ENCODE measurements at regions of chr19 and their contacts with region 1.

Region 1: GRCh38 chr19:42440357-42441048 is 2.2 kb downstream of the CXCL17 start:
- DNase-seq: peak; percentile 69 to 88 (median 80)
- ATAC-seq: peak; percentile 43
- H3K4me3 ChIP-seq: no peak overlapping the region
- H3K4me3 Mint-ChIP-seq: no peak overlapping the region
- H3K27ac ChIP-seq: no peak overlapping the region
- H3K27ac Mint-ChIP-seq: peak overlapping the region; percentile 4
- H3K4me1 ChIP-seq: peaks cover 15% of the 10 kb centered on the region
- H3K4me1 Mint-ChIP-seq: peaks cover 20% of the 10 kb centered on the region
- H3K27me3 ChIP-seq: no peaks in the 10 kb centered on the region
- H3K27me3 Mint-ChIP-seq: no peaks in the 10 kb centered on the region
- CTCF ChIP-seq: peak; percentile 96

Region 2: GRCh38 chr19:42401365-42402303 is 38.9 kb before region 1 on chr19:
- CTCF ChIA-PET with region 1: interaction called, 11 read pairs
- POLR2A ChIA-PET with region 1: no interaction called
- intact Hi-C with region 1: no loop called
- DNase-seq: peak; percentile 56 to 86 (median 77)
- ATAC-seq: peak; percentile 71
- H3K4me3 ChIP-seq: peak overlapping the region; percentile 47 to 61
- H3K4me3 Mint-ChIP-seq: peak overlapping the region; percentile 85
- H3K27ac ChIP-seq: peak overlapping the region; percentile 25 to 46
- H3K27ac Mint-ChIP-seq: peak overlapping the region; percentile 88
- H3K4me1 ChIP-seq: peaks cover 18% of the 10 kb centered on the region
- H3K4me1 Mint-ChIP-seq: peaks cover 41% of the 10 kb centered on the region
- H3K27me3 ChIP-seq: no peaks in the 10 kb centered on the region
- H3K27me3 Mint-ChIP-seq: no peaks in the 10 kb centered on the region
- CTCF ChIP-seq: peak; percentile 79

Region 3: GRCh38 chr19:43416951-43417623 is 976.6 kb after region 1 on chr19:
- CTCF ChIA-PET with region 1: no interaction called
- POLR2A ChIA-PET with region 1: no interaction called
- intact Hi-C with region 1: no loop called
- DNase-seq: no peak
- ATAC-seq: no peak
- H3K4me3 ChIP-seq: no peak overlapping the region
- H3K4me3 Mint-ChIP-seq: no peak overlapping the region
- H3K27ac ChIP-seq: no peak overlapping the region
- H3K27ac Mint-ChIP-seq: no peak overlapping the region
- H3K4me1 ChIP-seq: no peaks in the 10 kb centered on the region
- H3K4me1 Mint-ChIP-seq: no peaks in the 10 kb centered on the region
- H3K27me3 ChIP-seq: no peaks in the 10 kb centered on the region
- H3K27me3 Mint-ChIP-seq: peaks cover 2% of the 10 kb centered on the region
- CTCF ChIP-seq: no peak